Activated T-helper 1 cell treated with anti-CD3 and anti-CD28 coated beads, Interleukin-12 subunit alpha, Interleukin-12 subunit beta, Interleukin-2, Interleukin-4 antibody, amounts not matched to agents 30 ng/mL and 10 ng/mL and 1 ng/mL, durations not matched to agents 14 hours and 24 hours and 36 hours (primary cell): ENCODE measurements at regions of chr19 and their contacts with region 1.

Region 1: DNA sequence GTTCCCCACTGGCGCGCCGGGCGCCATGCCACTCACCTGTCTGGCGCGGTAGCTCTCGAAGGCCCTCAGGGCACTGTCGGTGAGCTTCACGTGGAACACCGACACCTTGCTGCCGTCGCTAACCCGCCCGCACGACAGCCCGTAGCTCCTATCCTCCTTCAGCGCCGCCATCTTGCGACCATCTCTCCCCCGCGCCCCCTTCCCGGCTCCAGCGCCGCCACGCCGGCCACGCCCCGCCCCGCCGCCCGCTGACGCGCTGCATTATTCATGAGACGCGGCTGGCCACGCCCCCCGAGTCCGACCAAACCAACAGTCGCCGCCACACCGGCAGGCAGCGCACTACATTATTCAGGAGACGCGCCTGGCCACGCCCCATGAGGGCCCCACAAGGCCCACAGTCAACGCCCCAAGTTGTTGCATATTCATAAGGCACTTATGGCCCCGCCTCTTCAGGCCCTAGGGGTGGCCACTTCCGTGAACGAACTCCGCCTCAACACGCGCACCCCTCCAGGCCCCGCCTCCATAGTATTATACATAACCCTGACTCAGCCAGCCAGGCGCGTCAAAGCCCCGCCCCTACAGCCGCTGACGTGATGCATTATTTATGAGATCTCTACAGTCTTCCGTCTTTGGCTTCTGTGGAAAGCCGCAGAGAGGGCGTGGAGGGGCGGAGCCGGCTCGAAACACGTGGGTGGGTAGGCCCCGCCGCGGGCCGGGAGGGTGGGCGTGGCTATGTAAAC is at the start of gene ELL:
- DNase-seq: peak; percentile 100
- H3K4me3 Mint-ChIP-seq: peak within 1 kb of the TSS; percentile 99
- H3K27ac Mint-ChIP-seq: peak within 1 kb of the TSS; percentile 93
- H3K4me1 Mint-ChIP-seq: peaks cover 12% of the 10 kb centered on the region
- H3K27me3 Mint-ChIP-seq: no peaks in the 10 kb centered on the region
- total RNA-seq, gene ELL: 23.6 and 24.1 TPM in 2 replicates

Region 2: GRCh38 chr19:18192673-18193387 is 329.2 kb before region 1 on chr19 and contains the start of gene MPV17L2:
- intact Hi-C with region 1: loop called (anchors 1 kb)
- DNase-seq: peak; percentile 99
- H3K4me3 Mint-ChIP-seq: peak within 1 kb of the TSS; percentile 83
- H3K27ac Mint-ChIP-seq: peak within 1 kb of the TSS; percentile 90
- H3K4me1 Mint-ChIP-seq: peaks cover 20% of the 10 kb centered on the region
- H3K27me3 Mint-ChIP-seq: no peaks in the 10 kb centered on the region
- total RNA-seq, gene MPV17L2: 19.2 and 23.3 TPM in 2 replicates

Region 3: DNA sequence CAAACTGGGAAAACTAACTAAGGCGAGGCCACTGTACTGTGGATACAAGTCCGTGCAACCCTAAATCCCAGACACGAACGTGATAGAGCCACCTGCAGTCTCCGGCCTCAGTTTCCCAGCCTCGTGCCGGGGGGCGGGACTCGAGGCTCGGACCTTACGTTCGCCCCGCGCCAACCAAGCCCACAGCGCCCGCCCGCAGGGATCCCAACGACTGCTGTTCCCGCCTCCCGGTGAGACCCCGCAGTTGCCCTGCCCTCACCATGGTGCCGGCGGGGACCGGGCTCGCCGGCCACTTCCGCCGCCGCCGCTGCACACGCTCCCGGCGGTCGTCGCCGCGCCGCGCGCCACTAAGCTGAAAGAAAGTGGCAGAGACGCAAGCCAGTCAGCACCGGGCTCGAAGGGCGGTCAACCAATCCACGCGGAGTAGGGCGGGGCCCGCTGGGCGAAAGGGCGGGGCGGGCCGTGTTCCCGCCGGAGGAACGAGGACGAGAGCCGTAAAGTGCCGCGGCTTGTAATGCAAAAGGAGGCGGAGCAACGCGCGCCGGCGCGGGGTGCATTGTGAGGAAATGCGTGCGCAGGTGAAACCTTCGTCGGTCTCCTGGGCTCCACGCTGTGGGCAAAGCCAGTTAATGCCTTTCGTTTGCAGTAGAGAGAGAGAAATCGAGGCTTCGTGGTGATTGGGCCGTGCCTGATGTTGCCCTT is 199.1 kb before region 1 on chr19 and contains the start of gene LSM4:
- intact Hi-C with region 1: loop called (anchors 1 kb)
- DNase-seq: peak; percentile 99
- H3K4me3 Mint-ChIP-seq: peak within 1 kb of the TSS; percentile 95
- H3K27ac Mint-ChIP-seq: peak within 1 kb of the TSS; percentile 93
- H3K4me1 Mint-ChIP-seq: peaks cover 53% of the 10 kb centered on the region
- H3K27me3 Mint-ChIP-seq: no peaks in the 10 kb centered on the region
- total RNA-seq, gene LSM4: 198 and 200 TPM in 2 replicates

Region 4: GRCh38 chr19:18478569-18479311 is 43.3 kb before region 1 on chr19:
- intact Hi-C with region 1: loop called (anchors 1 kb)
- DNase-seq: peak; percentile 55
- H3K4me3 Mint-ChIP-seq: peak overlapping the region; percentile 71
- H3K27ac Mint-ChIP-seq: peak overlapping the region; percentile 92
- H3K4me1 Mint-ChIP-seq: peaks cover 71% of the 10 kb centered on the region
- H3K27me3 Mint-ChIP-seq: peaks cover 1% of the 10 kb centered on the region

Region 5: DNA sequence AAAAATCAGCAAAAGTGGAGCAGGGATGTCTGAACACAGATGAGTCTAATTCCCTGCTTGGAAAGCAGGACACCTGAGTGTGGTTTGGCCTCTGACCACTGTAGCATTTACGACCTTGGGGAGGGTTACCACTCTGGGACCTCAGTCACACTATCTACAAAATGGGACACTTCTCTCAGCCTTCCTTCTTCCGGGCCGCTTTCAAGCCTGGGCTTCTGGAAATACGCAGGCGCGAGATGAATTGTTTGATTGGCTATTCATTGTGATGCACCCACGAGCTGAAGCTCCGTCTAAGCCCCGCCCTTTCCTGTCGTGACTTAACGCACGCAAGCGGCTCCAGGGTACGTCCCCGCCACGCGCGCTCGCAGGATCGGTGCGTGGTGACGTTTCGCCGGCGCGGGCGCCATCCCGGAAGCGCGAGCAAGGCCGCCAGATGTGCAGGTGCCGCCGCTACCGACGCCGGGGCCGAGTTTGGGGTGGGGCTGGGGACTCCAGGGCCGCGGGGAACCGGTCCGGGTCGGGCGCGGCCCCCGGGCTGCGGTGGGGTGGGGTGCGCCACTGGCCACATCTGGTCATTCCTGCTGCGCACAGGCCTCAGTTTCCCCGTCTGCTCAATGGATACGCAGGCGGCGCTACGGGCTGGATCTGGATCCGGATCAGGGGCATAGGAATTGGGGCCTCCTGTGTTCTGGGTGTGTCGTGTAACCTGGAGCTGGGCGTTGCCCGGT is 35.6 kb after region 1 on chr19 and contains the start of gene KXD1:
- intact Hi-C with region 1: loop called (anchors 1 kb)
- DNase-seq: peak; percentile 98
- H3K4me3 Mint-ChIP-seq: peak within 1 kb of the TSS; percentile 93
- H3K27ac Mint-ChIP-seq: peak within 1 kb of the TSS; percentile 92
- H3K4me1 Mint-ChIP-seq: peaks cover 20% of the 10 kb centered on the region
- H3K27me3 Mint-ChIP-seq: no peaks in the 10 kb centered on the region
- total RNA-seq, gene KXD1: 128 and 133 TPM in 2 replicates

Region 6: GRCh38 chr19:18636183-18636968 is 114.3 kb after region 1 on chr19:
- intact Hi-C with region 1: loop called (anchors 1 kb)
- DNase-seq: peak; percentile 97
- H3K4me3 Mint-ChIP-seq: peak overlapping the region; percentile 80
- H3K27ac Mint-ChIP-seq: peak overlapping the region; percentile 61
- H3K4me1 Mint-ChIP-seq: peaks cover 22% of the 10 kb centered on the region
- H3K27me3 Mint-ChIP-seq: peaks cover 5% of the 10 kb centered on the region

Region 7: GRCh38 chr19:18919086-18919899 is 397.2 kb after region 1 on chr19 and contains the starts of genes COPE and DDX49:
- intact Hi-C with region 1: loop called (anchors 1 kb)
- DNase-seq: peak; percentile 97
- H3K4me3 Mint-ChIP-seq: peak within 1 kb of the TSS; percentile 94
- H3K27ac Mint-ChIP-seq: peak within 1 kb of the TSS; percentile 84
- H3K4me1 Mint-ChIP-seq: peaks cover 21% of the 10 kb centered on the region
- H3K27me3 Mint-ChIP-seq: no peaks in the 10 kb centered on the region
- total RNA-seq, gene COPE: 221 and 229 TPM in 2 replicates
- total RNA-seq, gene DDX49: 101 and 114 TPM in 2 replicates